ENCODE measurements at regions of chr1 and their contacts with region 1.

Region 1: GRCh38 chr1:24201941-24202440 is 14.9 kb upstream of the IFNLR1 start:
- DNase-seq: peak; percentile 50
- CTCF ChIP-seq: peak; percentile 85

Region 2: DNA sequence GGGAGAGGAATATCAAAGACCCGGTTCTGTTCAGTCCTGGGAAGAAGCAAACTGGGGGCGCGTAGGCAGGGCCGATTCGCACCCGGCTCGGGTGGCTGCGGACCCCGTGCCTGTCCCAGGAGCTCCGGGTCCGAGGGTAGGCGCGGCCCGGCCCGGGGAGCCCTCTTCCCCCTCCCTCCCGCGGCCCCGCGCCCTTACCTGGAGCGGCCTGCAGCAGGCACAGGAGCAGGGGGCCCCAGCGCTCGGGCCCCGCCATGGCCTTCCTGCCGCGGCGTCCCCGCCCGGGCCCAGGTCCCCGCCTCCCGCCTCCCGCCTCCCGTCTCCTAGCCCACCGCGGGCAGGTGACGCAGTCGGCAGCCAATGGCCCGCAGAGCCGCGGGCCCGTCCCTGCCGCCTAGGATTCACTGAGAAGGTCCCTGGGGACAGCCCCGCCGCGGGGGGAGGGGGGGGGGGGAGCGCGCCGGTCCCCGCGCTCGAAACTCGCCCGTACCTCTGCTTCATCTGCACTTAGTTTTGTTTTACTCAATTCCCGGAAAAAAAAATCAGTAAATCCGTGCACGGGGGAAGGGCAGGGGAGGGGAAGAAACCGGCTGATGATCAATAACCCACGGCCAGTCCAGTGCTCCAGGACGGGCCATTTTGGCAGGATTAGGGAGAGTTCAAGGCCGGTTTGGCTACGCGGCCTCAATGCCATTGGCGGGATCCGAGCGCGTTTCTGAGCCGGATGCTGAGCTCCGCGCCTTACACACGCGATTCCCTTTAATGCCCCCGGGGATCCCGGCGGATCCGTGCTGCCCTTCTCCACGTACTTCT is 14.8 kb before region 1 on chr1 and contains the start of gene IFNLR1:
- CTCF ChIA-PET with region 1: interaction called, 97 read pairs
- POLR2A ChIA-PET with region 1: no interaction called
- DNase-seq: peak; percentile 94
- CTCF ChIP-seq: no peak

Region 3: GRCh38 chr1:24228311-24228710 is 26.3 kb after region 1 on chr1:
- CTCF ChIA-PET with region 1: interaction called, 11 read pairs
- POLR2A ChIA-PET with region 1: no interaction called
- DNase-seq: no peak
- CTCF ChIP-seq: no peak

Region 4: GRCh38 chr1:24341260-24341659 is 139.3 kb after region 1 on chr1:
- CTCF ChIA-PET with region 1: no interaction called
- POLR2A ChIA-PET with region 1: no interaction called
- DNase-seq: no peak
- CTCF ChIP-seq: no peak

Region 5: GRCh38 chr1:24373044-24373443 is 171.1 kb after region 1 on chr1:
- CTCF ChIA-PET with region 1: interaction called, 23 read pairs
- POLR2A ChIA-PET with region 1: no interaction called
- DNase-seq: peak; percentile 68
- CTCF ChIP-seq: no peak

Region 6: DNA sequence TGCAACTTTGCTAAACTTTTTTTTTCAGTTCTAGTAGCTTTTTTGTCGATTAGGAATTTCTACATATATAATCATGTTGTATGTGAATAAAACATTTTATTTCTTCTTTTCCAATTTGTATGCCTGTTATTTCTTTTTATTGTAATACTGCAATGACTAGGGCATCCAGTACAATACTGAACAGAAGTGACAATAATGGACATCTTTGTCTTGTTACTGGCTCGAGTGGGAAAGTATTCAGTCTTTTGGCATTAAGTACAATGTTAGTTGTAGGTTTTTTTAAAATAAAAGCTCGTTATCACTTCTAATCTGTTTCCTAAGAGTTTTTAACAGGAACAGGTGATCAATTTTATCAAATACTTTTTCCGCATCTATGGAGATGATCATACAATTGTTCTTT is 201.8 kb after region 1 on chr1:
- CTCF ChIA-PET with region 1: interaction called, 98 read pairs
- POLR2A ChIA-PET with region 1: no interaction called
- DNase-seq: no peak
- CTCF ChIP-seq: no peak

Region 7: GRCh38 chr1:24635195-24635843 is 433.3 kb after region 1 on chr1:
- CTCF ChIA-PET with region 1: interaction called, 59 read pairs
- POLR2A ChIA-PET with region 1: no interaction called
- DNase-seq: peak; percentile 67
- CTCF ChIP-seq: peak; percentile 72